ENCODE measurements at regions of chr6 and their contacts with region 1.

Region 1: GRCh38 chr6:107473660-107474059 is 14.3 kb upstream of the PDSS2 start:
- DNase-seq: no peak
- H3K4me3 ChIP-seq: no peak overlapping the region
- CTCF ChIP-seq: no peak

Region 2: DNA sequence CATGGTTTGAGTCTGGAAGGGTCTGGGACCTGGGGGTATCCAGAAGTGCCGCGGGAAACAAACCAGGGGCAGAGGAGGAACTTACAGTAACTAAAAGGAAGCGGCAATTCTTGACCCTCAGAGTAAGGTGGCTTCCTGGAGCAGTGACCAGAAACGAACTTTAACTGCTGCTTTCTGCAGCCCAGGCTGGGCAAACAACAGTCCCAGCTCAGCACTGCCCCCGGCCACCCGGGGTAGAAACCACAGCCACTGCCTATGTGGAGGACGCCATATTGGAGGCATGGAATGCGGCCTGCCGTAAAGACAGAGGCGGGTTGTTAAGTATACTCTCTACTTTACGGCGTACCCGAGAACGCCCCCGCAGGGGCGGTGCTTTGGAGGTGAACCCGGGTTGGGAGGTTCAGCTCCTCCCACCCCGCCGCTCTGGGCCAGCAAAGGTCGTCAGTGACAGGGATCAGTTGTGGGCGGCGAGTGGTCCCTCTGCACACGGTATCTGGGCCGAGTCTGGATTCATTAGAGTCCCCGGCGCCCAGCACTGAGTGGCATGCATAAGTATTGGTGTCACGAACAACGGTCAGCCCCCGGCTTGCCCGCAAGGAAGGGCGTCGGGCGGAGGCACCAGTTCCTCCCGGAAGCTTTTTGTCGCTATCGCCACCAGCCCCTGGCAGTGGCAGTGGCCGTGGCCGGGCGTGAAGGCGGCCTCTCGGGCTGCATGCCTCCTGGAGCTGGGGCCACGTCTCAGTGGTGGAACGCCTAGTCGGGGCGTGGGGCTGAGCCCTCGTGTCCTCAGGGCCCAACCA is 14.2 kb before region 1 on chr6 and contains the start of gene PDSS2:
- CTCF ChIA-PET with region 1: interaction called, 11 read pairs
- POLR2A ChIA-PET with region 1: interaction called, 7 read pairs
- DNase-seq: peak; percentile 75
- H3K4me3 ChIP-seq: peak within 1 kb of the TSS; percentile 96
- CTCF ChIP-seq: peak; percentile 69

Region 3: GRCh38 chr6:107506145-107506544 is 32.5 kb after region 1 on chr6:
- CTCF ChIA-PET with region 1: no interaction called
- POLR2A ChIA-PET with region 1: no interaction called
- DNase-seq: no peak
- H3K4me3 ChIP-seq: no peak overlapping the region
- CTCF ChIP-seq: no peak

Region 4: GRCh38 chr6:108027594-108027993 is 553.9 kb after region 1 on chr6:
- CTCF ChIA-PET with region 1: no interaction called
- POLR2A ChIA-PET with region 1: no interaction called
- DNase-seq: no peak
- H3K4me3 ChIP-seq: no peak overlapping the region
- CTCF ChIP-seq: no peak

Measured in AG04449 (cell line).